BJ (cell line): ENCODE measurements at regions of chr1 and their contacts with region 1.

Region 1: GRCh38 chr1:22416555-22417454 is 34.8 kb upstream of the ZBTB40 start:
- DNase-seq: no peak
- H3K4me3 ChIP-seq: no peak overlapping the region
- H3K27me3 ChIP-seq: no peaks in the 10 kb centered on the region; the same call in 1 of the 2 replicates
- CTCF ChIP-seq: peak; percentile 96

Region 2: GRCh38 chr1:22285549-22286396 is 131.0 kb before region 1 on chr1:
- CTCF ChIA-PET with region 1: no interaction called
- POLR2A ChIA-PET with region 1: no interaction called
- DNase-seq: no peak
- H3K4me3 ChIP-seq: no peak overlapping the region
- H3K27me3 ChIP-seq: peaks cover 8% of the 10 kb centered on the region
- CTCF ChIP-seq: no peak

Region 3: DNA sequence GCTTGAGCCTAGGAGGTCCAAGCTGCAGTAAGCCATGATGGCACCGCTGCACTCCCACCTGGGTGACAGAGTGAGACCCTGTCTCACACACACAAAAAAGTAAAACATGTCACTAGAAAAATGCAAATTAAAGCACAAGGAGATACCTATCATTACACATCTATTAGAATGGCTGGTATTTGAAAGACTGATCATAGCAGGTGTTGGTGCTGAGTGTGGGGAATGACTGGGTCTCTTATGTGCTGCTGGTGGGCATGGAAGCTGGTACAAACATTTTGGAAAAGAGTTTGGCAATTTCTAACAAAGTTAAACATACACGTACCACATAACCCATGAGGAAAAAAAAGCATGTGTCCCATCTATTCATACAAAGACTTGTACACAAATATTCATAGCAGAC is 107.2 kb before region 1 on chr1:
- CTCF ChIA-PET with region 1: no interaction called
- POLR2A ChIA-PET with region 1: no interaction called
- DNase-seq: no peak
- H3K4me3 ChIP-seq: no peak overlapping the region
- H3K27me3 ChIP-seq: peaks cover 7% of the 10 kb centered on the region
- CTCF ChIP-seq: no peak

Region 4: DNA sequence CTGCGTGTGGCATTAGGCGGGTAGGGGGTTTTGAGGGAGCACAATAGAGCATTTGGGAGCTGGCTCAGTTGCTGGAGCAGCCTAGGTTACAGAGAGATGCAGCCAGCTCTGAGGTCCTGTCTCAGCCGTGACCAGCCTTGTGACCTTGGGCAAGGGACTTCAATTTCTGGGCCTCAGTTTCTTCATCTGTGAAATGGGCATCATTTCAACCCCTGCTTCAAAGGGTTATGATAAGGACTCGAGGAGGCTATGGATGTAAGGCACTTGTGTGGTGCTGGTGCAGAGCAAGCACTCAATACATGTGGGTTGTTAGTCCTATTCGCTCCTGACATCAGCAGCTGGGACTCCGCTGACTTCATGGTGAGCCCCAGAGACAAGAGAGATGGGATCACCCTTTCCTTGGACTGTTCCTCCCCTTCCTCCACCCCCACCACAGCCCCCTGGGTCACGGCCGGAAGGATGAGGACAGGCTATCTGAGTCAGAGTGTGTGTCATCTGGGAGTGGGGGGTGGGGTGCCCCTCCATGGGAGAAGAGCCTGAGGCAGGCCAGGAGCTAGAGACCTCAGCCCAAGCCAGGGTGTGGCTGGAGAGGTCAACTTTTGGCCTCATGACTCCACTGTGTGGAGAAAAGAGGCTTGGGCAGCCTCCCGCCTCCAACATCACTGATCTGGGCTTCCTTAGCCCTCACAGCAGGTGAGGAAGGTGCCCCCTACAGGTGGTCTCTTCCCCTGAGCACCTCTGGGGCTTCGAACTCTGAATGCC is 36.6 kb before region 1 on chr1:
- CTCF ChIA-PET with region 1: no interaction called
- POLR2A ChIA-PET with region 1: no interaction called
- DNase-seq: no peak
- H3K4me3 ChIP-seq: no peak overlapping the region
- H3K27me3 ChIP-seq: peaks cover 1% of the 10 kb centered on the region; the same call in 1 of the 2 replicates
- CTCF ChIP-seq: no peak

Region 5: DNA sequence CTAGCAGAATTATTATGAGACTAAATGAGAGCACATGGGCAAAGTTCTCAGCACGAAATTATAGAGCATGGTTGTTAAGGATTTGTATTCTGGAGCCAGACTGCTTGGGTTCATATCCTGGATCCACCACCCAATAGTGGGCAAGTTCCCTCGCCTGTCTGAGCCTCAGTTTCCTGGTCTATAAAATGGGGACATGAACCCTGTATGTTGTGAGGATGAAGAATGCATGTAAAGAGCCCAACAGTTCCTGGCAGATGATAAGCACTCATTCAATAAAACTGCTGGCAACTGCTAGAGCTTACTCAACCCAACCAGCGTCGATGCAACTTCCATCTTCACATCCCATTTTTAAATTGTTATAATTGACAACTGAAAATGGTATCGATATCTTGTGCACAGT is 12.3 kb before region 1 on chr1:
- CTCF ChIA-PET with region 1: interaction called, 14 read pairs
- POLR2A ChIA-PET with region 1: no interaction called
- DNase-seq: no peak
- H3K4me3 ChIP-seq: no peak overlapping the region
- H3K27me3 ChIP-seq: peaks cover 5% of the 10 kb centered on the region; the same call in 1 of the 2 replicates
- CTCF ChIP-seq: no peak

Region 6: GRCh38 chr1:22529901-22530621 is 113.3 kb after region 1 on chr1:
- CTCF ChIA-PET with region 1: interaction called, 12 read pairs
- POLR2A ChIA-PET with region 1: no interaction called
- DNase-seq: peak; percentile 17
- H3K4me3 ChIP-seq: no peak overlapping the region
- H3K27me3 ChIP-seq: no peaks in the 10 kb centered on the region
- CTCF ChIP-seq: no peak

Region 7: DNA sequence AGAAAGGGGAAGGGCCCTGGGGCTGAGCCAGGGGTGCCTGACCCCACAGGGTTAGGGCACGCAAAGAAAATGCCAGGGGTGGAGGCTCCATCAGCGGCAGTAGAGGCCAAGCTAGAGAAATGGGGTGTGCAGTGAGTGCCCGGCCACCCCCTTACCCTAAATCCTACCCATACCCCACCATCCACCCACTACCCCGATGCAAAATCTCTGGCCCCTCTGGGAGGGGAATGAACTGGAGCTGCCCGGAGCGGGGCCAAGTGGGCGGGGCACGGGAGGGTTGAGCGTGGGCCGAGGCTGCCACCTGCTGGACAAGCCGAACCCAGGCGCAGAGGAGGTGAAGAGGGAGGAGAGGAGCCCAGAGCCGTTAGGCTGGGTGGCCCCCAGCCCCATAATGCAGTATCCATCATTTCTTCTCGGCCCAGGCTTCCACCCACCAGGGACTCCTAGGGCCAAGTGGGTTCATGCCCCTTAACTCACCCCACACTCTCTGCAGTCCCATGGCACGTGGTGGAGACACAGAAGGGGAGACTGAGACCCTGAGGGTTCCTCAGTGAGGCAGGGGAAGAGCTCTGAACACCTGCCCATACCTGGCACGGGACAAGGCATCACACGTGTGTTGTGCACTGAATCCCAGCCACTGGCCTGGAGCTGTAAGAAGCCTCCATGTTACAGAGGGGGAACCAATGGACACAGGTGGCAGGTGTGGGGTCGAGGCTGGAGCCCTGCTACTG is 225.3 kb after region 1 on chr1:
- CTCF ChIA-PET with region 1: interaction called, 237 read pairs
- POLR2A ChIA-PET with region 1: no interaction called
- DNase-seq: no peak
- H3K4me3 ChIP-seq: no peak overlapping the region
- H3K27me3 ChIP-seq: 0 out of 2 replicates have a peak, but pooled peaks cover 2% of the 10 kb centered on the region
- CTCF ChIP-seq: peak; percentile 97